ENCODE measurements at regions of chr2 and their contacts with region 1.

Region 1: DNA sequence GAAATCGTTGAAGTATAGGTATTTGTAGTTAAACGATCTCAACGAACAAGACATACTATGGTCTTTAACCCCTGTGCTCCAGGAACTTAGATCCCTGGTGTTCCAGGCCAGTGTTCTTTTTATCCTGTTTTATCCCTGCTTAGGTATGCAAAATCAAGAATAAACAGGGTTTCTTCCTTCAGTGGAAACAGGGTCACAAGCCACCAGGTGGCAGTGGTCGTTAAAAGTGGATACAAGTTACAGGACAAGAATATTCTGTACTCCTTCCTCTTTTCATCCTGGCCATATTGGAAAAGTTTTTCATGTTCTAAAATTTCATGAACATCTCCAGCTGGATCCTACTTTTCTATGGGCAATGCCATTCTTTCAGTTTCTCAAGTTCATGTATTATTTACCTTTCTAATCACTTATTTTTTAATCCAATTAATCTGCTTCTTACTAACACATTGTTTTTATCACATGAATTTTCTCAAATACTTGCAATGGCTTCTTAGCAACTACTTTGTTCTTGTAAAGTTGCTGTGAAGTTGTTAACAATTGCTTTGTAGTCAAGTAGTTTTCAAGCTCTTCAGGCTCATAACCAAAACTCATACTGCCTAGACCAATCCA is 16.4 kb upstream of the HNMT start:
- DNase-seq: peak; percentile 90

Region 2: GRCh38 chr2:138090330-138090729 is 142.5 kb after region 1 on chr2:
- intact Hi-C with region 1: loop called in 1 of 2 experiments (anchors 10 kb)
- DNase-seq: no peak

Region 3: GRCh38 chr2:138373993-138374408 is 426.2 kb after region 1 on chr2:
- intact Hi-C with region 1: loop called in 1 of 2 experiments (anchors 10 kb)
- DNase-seq: no peak

Measured in posterior vena cava (tissue), 2 donors.